Activated CD4-positive, alpha-beta T cell treated with anti-CD3 and anti-CD28 coated beads for 36 hours (primary cell): ENCODE measurements at regions of chr18 and their contacts with region 1.

Region 1: DNA sequence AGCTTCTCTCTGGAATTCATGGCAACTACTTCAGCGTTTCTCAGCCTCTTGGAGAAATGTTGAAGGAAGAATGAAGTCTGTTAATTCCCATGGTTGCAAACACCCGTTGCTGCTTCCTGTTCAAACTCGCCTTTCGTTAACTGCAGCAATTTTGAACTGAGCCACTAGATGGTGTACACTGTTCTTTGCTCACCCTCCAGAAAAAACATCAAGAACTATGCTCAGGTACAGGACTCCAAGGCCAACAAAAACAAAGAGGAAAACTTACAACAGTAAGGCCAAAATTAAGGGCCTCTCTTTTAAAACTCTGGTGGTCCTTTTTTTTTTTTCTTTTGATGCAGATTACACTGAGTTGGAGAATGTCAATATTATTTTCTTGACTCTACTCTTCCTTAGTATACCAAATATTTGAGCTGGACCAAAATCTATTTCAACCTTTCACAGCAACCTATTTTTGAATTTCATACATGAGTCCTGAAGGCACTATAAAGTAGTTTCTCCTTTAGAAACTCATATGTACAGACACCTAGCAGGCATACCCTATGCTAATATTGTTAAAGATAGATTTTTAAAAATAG is 58.2 kb downstream of the KLHL14 start:
- DNase-seq: peak; percentile 16
- ATAC-seq: peak; percentile 60
- H3K4me3 Mint-ChIP-seq: no peak overlapping the region
- H3K27ac Mint-ChIP-seq: no peak overlapping the region
- H3K4me1 Mint-ChIP-seq: no peaks in the 10 kb centered on the region
- H3K27me3 Mint-ChIP-seq: no peaks in the 10 kb centered on the region

Region 2: DNA sequence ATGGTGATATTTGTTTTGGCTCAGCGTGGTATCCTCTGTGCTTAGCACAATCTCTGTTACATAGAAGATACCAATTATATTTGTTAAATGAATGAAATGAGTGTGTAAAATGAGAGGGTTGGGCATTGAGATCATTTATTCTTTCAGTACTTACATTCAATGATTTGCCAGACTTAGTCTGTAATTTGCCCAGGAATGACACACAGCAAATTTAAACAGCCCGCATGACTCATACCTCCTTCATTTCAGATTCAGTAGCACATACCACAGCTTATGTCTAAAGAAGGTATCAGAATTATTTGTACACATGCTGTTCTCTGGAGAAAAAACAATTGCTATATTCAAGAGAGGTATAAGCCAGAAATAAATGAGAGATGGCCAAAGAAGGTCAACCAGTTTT is 21.1 kb after region 1 on chr18:
- CTCF ChIA-PET with region 1: no interaction called
- POLR2A ChIA-PET with region 1: no interaction called
- intact Hi-C with region 1: no loop called
- DNase-seq: no peak
- ATAC-seq: no peak
- H3K4me3 Mint-ChIP-seq: no peak overlapping the region
- H3K27ac Mint-ChIP-seq: no peak overlapping the region
- H3K4me1 Mint-ChIP-seq: peaks cover 5% of the 10 kb centered on the region
- H3K27me3 Mint-ChIP-seq: peaks cover 16% of the 10 kb centered on the region

Region 3: DNA sequence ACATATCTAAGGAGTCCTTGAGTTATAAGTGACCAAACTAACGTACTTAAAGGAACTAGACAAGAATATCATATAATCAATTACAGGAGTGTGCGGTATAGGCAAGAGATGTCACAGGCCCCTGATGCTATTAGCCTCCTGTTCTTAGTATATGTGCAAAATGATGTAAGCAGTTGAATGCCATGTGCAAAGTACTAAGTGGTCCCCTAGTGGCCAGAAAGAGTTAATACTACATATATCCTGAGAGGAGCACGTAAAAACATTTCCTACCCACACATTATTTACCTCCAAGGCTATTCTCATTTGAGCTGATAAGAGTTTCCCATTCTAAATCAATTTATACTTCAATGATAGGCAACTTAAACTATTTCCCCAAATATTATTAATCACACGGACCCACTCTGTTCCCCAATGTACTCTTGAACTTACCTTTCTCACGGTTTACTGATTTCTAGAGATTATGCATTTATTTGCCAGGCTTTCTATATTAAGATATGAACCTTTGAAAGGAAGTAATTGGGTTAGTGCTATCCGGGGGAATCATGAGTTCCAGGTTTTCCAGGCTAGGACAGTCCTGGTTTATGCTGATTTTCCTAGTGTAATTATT is 216.1 kb after region 1 on chr18:
- CTCF ChIA-PET with region 1: interaction called, 3 read pairs
- POLR2A ChIA-PET with region 1: no interaction called
- intact Hi-C with region 1: loop called in 1 of 2 experiments (anchors 1 kb)
- DNase-seq: no peak
- ATAC-seq: peak; percentile 70
- H3K4me3 Mint-ChIP-seq: no peak overlapping the region
- H3K27ac Mint-ChIP-seq: no peak overlapping the region
- H3K4me1 Mint-ChIP-seq: no peaks in the 10 kb centered on the region
- H3K27me3 Mint-ChIP-seq: no peaks in the 10 kb centered on the region

Region 4: GRCh38 chr18:33472509-33472908 is 757.8 kb after region 1 on chr18:
- CTCF ChIA-PET with region 1: no interaction called
- POLR2A ChIA-PET with region 1: no interaction called
- intact Hi-C with region 1: no loop called
- DNase-seq: no peak
- ATAC-seq: no peak
- H3K4me3 Mint-ChIP-seq: no peak overlapping the region
- H3K27ac Mint-ChIP-seq: no peak overlapping the region
- H3K4me1 Mint-ChIP-seq: no peaks in the 10 kb centered on the region
- H3K27me3 Mint-ChIP-seq: no peaks in the 10 kb centered on the region